ENCODE measurements at regions of chr5 and their contacts with region 1.

Region 1: DNA sequence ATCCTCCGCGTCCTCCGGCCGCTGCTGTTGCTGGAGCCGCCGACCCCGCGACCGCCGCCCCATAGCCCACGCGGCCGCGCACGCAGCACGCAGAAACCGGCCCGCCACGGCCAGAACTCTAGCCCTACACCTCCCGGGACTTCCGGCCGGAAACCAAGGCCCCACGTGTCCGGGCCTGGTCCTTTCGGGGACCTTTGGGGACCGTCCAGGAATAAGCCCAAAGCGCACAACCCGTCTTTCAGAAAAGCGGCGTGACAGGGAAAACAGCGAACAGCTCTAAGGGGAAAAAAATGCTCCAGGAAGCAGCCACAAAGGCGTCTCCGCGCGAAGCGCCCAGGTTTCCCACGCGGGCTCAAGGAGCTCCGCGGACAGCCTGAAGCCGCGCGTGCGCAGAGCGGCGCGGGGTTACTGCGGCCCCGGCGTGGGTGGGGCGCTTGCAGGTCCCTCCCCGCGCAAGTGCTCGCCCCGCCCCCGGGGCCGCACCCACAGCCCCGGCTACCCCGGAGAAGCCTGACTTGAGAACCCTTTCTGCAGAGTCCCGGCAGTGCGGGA is at the starts of genes NSUN2 and SRD5A1:
- DNase-seq: peak; percentile 96
- ATAC-seq: peak; percentile 99
- total RNA-seq, gene NSUN2: 34.2 TPM
- total RNA-seq, gene SRD5A1: 3.2 TPM

Region 2: GRCh38 chr5:6712577-6713275 is 79.7 kb after region 1 on chr5:
- intact Hi-C with region 1: loop called (anchors 2 kb)
- DNase-seq: peak; percentile 98
- ATAC-seq: peak; percentile 90

Region 3: DNA sequence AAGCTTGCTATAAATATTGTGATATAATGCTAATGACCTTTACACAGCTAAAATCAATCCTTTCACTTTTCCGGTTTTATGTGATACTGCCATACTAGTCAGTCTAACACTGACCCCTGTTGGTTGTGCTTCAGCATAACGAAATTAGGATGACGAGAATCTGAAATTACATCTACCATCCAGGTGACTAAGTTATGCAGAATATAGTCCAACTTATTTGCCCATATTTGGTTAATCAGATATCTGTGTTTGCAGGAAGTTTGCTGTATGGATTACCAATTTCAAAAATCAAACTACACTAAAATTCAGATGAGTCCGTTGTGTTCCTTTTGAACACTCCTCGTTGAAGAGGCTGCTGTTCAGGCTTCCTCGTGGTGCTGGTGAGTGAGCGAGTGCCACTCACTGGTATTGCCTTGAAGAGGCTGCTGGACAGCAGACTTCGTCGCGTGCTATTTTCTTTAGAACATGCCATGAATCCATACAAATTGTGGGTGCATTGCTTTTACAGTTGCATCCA is 112.8 kb after region 1 on chr5:
- intact Hi-C with region 1: loop called (anchors 1 kb)
- DNase-seq: no peak
- ATAC-seq: peak; percentile 57